ENCODE measurements at regions of chr7 and their contacts with region 1.

Region 1: GRCh38 chr7:47100817-47101435 is 481.0 kb downstream of the TNS3 start:
- DNase-seq: peak; percentile 56
- H3K4me3 ChIP-seq: no peak overlapping the region
- H3K27ac ChIP-seq: no peak overlapping the region
- H3K4me1 ChIP-seq: peaks cover 14% of the 10 kb centered on the region
- CTCF ChIP-seq: peak; percentile 88

Region 2: GRCh38 chr7:46616636-46617035 is 484.3 kb before region 1 on chr7:
- CTCF ChIA-PET with region 1: no interaction called
- POLR2A ChIA-PET with region 1: no interaction called
- intact Hi-C with region 1: no loop called
- DNase-seq: no peak
- H3K4me3 ChIP-seq: no peak overlapping the region
- H3K27ac ChIP-seq: no peak overlapping the region
- H3K4me1 ChIP-seq: no peaks in the 10 kb centered on the region
- CTCF ChIP-seq: no peak

Region 3: GRCh38 chr7:47119261-47119865 is 18.4 kb after region 1 on chr7:
- CTCF ChIA-PET with region 1: interaction called, 5 read pairs
- POLR2A ChIA-PET with region 1: interaction called, 13 read pairs
- intact Hi-C with region 1: no loop called
- DNase-seq: no peak
- H3K4me3 ChIP-seq: no peak overlapping the region
- H3K27ac ChIP-seq: no peak overlapping the region
- H3K4me1 ChIP-seq: peaks cover 19% of the 10 kb centered on the region
- CTCF ChIP-seq: no peak